ENCODE measurements at regions of chr15 and their contacts with region 1.

Region 1: DNA sequence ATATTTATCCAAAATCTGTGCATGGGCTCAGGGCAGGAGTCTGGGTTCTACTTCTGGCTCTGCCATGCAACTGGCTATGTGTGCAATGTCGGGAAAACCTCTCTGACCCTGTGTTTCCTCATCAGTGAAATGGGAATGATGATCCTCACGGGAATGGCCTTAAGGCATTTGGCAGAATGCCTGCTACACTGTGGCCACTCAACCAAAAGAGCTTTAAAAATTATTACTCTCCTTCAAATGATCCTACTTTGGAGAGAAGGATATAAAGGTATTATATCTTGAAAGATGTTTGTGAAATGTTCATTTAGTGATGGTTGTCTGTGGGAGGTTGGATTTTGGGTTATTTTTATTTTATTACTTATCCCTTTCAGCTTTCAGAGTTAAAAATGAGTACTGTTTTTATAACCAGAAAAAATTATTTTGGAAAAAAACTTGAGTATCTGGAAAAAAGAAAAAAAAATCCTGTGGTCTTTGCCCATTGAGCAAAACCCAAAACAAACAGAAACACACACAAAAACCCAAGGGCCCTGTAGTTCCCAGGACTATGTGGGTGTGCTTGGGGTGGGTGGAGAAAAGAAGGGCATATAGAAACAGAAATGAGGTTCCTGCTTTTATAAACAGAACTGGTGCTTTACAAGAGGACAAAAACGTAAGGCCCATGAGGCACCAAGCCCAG is 22.0 kb downstream of the RGMA start:
- DNase-seq: no peak
- H3K4me3 ChIP-seq: no peak overlapping the region
- H3K27ac ChIP-seq: no peak overlapping the region
- H3K4me1 ChIP-seq: no peaks in the 10 kb centered on the region
- H3K27me3 ChIP-seq: peaks cover 7% of the 10 kb centered on the region
- CTCF ChIP-seq: no peak

Region 2: GRCh38 chr15:92989470-92989869 is 77.5 kb before region 1 on chr15:
- intact Hi-C with region 1: no loop called
- DNase-seq: no peak
- H3K4me3 ChIP-seq: no peak overlapping the region
- H3K27ac ChIP-seq: no peak overlapping the region
- H3K4me1 ChIP-seq: no peaks in the 10 kb centered on the region
- H3K27me3 ChIP-seq: no peaks in the 10 kb centered on the region
- CTCF ChIP-seq: no peak

Region 3: GRCh38 chr15:93048759-93049161 is 18.2 kb before region 1 on chr15:
- intact Hi-C with region 1: loop called (anchors 2 kb)
- DNase-seq: no peak
- H3K4me3 ChIP-seq: no peak overlapping the region
- H3K27ac ChIP-seq: no peak overlapping the region
- H3K4me1 ChIP-seq: no peaks in the 10 kb centered on the region
- H3K27me3 ChIP-seq: no peaks in the 10 kb centered on the region
- CTCF ChIP-seq: no peak

Measured in colonic mucosa (tissue), 4 donors.